Naive thymus-derived CD4-positive, alpha-beta T cell (primary cell): ENCODE measurements at regions of chr17 and their contacts with region 1.

Region 1: GRCh38 chr17:1122533-1123392 is 57.0 kb downstream of the ABR start:
- DNase-seq: peak; percentile 53 to 87 (median 75)
- ATAC-seq: peak; percentile 88
- H3K4me3 ChIP-seq: no peak overlapping the region
- H3K4me3 Mint-ChIP-seq: peak overlapping the region in 1 of 10 donors; percentile 4
- H3K27ac ChIP-seq: no peak overlapping the region
- H3K27ac Mint-ChIP-seq: peak overlapping the region in 3 of 9 donors; percentile 13 to 43 (median 37)
- H3K4me1 ChIP-seq: peaks cover 5 to 8% of the 10 kb centered on the region in 2 donors
- H3K4me1 Mint-ChIP-seq: peaks cover 0 to 11% (median 6%) of the 10 kb centered on the region in 7 donors
- H3K27me3 ChIP-seq: no peaks in the 10 kb centered on the region
- H3K27me3 Mint-ChIP-seq: no peaks in the 10 kb centered on the region

Region 2: DNA sequence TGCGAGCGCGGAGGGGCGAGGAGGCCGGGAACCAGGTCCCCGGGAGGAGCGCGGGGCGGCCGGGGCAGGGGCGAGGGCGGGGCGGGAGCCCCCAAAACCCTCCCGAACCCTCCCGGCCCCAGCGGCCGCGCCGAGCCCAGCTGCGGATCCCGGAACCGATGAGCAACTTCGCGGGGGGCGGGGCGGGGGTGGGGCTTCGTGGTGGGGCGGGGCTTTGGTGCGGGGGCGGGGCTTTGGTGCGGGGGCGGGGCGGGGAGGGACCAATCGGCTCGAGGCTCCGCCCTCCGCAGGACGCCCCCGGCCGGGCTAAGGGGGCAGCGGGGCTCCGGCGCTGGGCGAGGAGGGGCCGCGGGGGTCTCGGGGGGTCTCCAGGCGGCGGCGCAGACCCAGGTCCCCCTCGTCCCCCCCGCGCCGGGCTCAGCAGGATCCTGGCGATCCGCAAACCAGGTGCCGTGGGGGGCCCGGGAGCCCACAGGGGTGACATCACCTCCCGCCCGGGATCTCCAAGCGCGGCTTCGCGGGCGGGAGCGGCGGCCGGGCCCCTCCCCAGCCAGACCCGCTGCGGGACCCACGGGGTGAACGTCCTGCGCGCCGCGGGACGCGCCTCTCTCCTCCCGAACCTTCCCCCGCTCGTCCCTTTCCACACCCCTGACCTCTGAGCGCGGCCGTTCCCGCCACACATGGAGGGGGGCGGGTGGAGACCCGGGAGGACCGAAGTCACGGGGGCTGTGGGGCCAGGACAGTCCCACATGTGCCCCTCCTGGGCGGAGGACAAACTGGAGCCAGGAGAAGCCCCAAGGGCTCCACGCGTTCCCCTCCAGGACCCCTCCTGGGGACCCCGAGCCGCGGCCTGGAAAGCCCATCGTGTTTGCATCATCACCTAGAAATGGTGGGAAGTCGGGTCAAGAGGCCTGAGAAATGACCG is 57.3 kb after region 1 on chr17 and contains the start of gene ABR:
- CTCF ChIA-PET with region 1: interaction called, 74 read pairs
- POLR2A ChIA-PET with region 1: no interaction called
- intact Hi-C with region 1: loop called in 1 of 2 experiments (anchors 1 kb)
- DNase-seq: peak in 8 of 9 donors; percentile 40 to 65 (median 52)
- ATAC-seq: peak; percentile 84
- H3K4me3 ChIP-seq: peak within 1 kb of the TSS; percentile 51
- H3K4me3 Mint-ChIP-seq: peak within 1 kb of the TSS; percentile 58 to 86 (median 74)
- H3K27ac ChIP-seq: peak within 1 kb of the TSS; percentile 64
- H3K27ac Mint-ChIP-seq: peak within 1 kb of the TSS in 4 of 9 donors; percentile 21 to 59 (median 40)
- H3K4me1 ChIP-seq: peaks cover 3 to 5% of the 10 kb centered on the region in 2 donors
- H3K4me1 Mint-ChIP-seq: peaks cover 0 to 10% (median 4%) of the 10 kb centered on the region in 7 donors
- H3K27me3 ChIP-seq: no peaks in the 10 kb centered on the region
- H3K27me3 Mint-ChIP-seq: peaks cover 0 to 33% (median 0%) of the 10 kb centered on the region in 5 donors
- total RNA-seq, gene ABR: 85.3 to 152 (median 140) TPM

Region 3: DNA sequence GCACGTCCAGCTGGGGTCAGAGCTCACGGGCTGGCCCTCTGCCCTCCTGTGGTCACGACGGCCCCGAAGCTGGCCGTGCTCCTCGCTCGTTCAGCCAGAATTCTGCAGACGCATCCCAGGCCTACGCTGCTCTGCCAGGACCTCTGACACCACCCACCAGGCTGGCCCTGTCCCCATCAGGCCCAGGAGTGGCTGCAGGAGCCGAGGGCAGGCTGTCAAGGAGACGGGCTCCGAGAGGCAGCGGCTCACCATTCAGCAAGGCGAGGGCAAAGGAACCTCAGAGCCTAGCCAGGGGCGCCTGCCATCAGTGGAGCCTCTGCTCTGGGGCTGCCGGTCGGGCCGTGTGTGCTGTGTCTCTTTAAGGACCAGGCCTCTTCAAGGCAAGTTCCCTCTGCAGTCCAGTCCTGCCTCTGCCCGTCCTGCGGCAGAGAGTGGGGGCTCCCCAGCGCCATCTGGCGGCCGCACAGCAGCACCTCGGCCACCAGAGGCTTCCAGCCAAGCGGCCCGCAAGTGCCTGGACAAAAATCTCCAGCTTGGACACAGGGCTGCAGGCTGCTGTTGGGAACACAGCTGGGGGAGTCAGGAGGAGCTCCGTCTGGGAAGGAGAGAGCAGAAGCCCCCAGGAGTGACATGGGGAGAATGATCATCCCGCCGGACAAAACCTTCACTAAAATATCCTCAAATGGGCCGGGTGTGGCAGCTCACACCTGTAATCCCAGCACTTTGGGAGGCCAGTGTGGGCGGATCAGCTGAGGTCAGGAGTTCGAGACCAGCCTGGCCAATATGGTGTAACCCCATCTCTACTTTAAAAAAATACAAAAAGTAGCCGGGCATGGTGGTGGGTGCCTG is 64.4 kb after region 1 on chr17:
- CTCF ChIA-PET with region 1: interaction called, 74 read pairs
- POLR2A ChIA-PET with region 1: interaction called, 3 read pairs
- intact Hi-C with region 1: loop called (anchors 1 to 2 kb)
- DNase-seq: peak; percentile 49 to 82 (median 73)
- ATAC-seq: peak; percentile 94
- H3K4me3 ChIP-seq: no peak overlapping the region
- H3K4me3 Mint-ChIP-seq: peak overlapping the region in 1 of 10 donors; percentile 2
- H3K27ac ChIP-seq: no peak overlapping the region
- H3K27ac Mint-ChIP-seq: peak overlapping the region in 1 of 9 donors; percentile 14
- H3K4me1 ChIP-seq: peaks cover 0 to 7% of the 10 kb centered on the region in 2 donors
- H3K4me1 Mint-ChIP-seq: peaks cover 0 to 14% (median 7%) of the 10 kb centered on the region in 7 donors
- H3K27me3 ChIP-seq: no peaks in the 10 kb centered on the region
- H3K27me3 Mint-ChIP-seq: peaks cover 0 to 22% (median 0%) of the 10 kb centered on the region in 5 donors

Region 4: DNA sequence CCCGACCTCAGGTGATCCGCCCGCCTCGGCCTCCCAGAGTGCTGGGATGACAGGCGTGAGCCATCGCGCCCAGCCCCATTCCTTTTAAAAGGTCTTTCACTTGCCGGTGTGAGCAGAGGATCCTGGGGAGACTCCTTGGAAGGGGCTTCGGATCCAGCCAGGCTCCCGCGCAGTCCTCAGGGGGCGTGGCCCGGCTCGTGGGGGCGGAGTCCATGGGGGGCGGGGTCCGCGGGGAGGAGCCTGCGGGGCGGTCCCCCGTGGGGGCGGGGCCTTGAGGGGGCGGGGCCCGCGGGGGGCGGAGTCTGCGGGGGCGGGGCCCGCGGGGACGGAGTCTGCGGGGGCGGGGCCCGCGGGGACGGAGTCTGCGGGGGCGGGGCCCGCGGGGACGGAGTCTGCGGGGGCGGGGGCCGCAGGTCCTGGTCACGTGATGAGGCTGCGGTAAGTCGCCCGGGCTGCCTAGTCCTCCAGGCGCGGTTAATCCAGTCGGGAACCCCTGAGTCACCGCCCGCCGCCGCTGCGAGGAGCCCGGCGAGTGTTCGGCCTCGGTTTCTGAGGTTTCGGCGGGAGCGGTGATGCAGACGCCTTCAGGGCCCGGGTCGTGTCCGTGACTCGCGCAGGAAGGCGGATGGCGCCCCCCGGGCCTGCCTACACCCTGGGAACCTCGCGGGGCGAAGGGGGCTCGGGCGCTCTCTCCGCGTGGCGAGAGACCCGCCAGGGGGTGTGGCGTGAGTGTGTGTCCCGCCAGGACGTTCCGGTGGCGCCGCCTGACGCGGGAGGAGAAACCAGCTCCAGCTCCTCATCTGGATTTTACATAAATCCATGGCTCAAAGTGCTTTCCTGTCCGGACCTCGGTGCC is 80.6 kb after region 1 on chr17:
- CTCF ChIA-PET with region 1: interaction called, 5 read pairs
- POLR2A ChIA-PET with region 1: no interaction called
- intact Hi-C with region 1: loop called in 1 of 2 experiments (anchors 5 kb)
- DNase-seq: peak in 7 of 9 donors; percentile 25 to 69 (median 48)
- ATAC-seq: peak; percentile 89
- H3K4me3 ChIP-seq: no peak overlapping the region
- H3K4me3 Mint-ChIP-seq: peak overlapping the region in 4 of 10 donors; percentile 11 to 76 (median 12)
- H3K27ac ChIP-seq: no peak overlapping the region
- H3K27ac Mint-ChIP-seq: no peak overlapping the region
- H3K4me1 ChIP-seq: peaks cover 13 to 43% of the 10 kb centered on the region in 2 donors
- H3K4me1 Mint-ChIP-seq: peaks cover 25 to 34% (median 29%) of the 10 kb centered on the region in 7 donors
- H3K27me3 ChIP-seq: no peaks in the 10 kb centered on the region
- H3K27me3 Mint-ChIP-seq: no peaks in the 10 kb centered on the region

Region 5: GRCh38 chr17:1260086-1260769 is 137.5 kb after region 1 on chr17:
- CTCF ChIA-PET with region 1: no interaction called
- POLR2A ChIA-PET with region 1: no interaction called
- intact Hi-C with region 1: loop called in 1 of 2 experiments (anchors 5 kb)
- DNase-seq: no peak
- ATAC-seq: no peak
- H3K4me3 ChIP-seq: no peak overlapping the region
- H3K4me3 Mint-ChIP-seq: peak overlapping the region in 9 of 10 donors; percentile 11 to 81 (median 56)
- H3K27ac ChIP-seq: no peak overlapping the region
- H3K27ac Mint-ChIP-seq: no peak overlapping the region
- H3K4me1 ChIP-seq: peaks cover 11 to 14% of the 10 kb centered on the region in 2 donors
- H3K4me1 Mint-ChIP-seq: peaks cover 4 to 32% (median 22%) of the 10 kb centered on the region in 7 donors
- H3K27me3 ChIP-seq: peaks cover 3 to 10% of the 10 kb centered on the region in 2 donors
- H3K27me3 Mint-ChIP-seq: peaks cover 26 to 59% (median 29%) of the 10 kb centered on the region in 5 donors

Region 6: GRCh38 chr17:1331708-1332107 is 208.9 kb after region 1 on chr17:
- CTCF ChIA-PET with region 1: interaction called, 7 read pairs
- POLR2A ChIA-PET with region 1: no interaction called
- intact Hi-C with region 1: loop called (anchors 2 to 5 kb)
- DNase-seq: peak in 7 of 9 donors; percentile 48 to 76 (median 56)
- ATAC-seq: peak; percentile 83
- H3K4me3 ChIP-seq: no peak overlapping the region
- H3K4me3 Mint-ChIP-seq: peak overlapping the region in 9 of 10 donors; percentile 10 to 80 (median 55)
- H3K27ac ChIP-seq: no peak overlapping the region
- H3K27ac Mint-ChIP-seq: peak overlapping the region in 6 of 9 donors; percentile 1 to 85 (median 66)
- H3K4me1 ChIP-seq: peaks cover 0 to 12% of the 10 kb centered on the region in 2 donors
- H3K4me1 Mint-ChIP-seq: peaks cover 4 to 15% (median 12%) of the 10 kb centered on the region in 7 donors
- H3K27me3 ChIP-seq: no peaks in the 10 kb centered on the region
- H3K27me3 Mint-ChIP-seq: no peaks in the 10 kb centered on the region